CD8-positive, alpha-beta memory T cell (primary cell): ENCODE measurements at regions of chr3 and their contacts with region 1.

Region 1: DNA sequence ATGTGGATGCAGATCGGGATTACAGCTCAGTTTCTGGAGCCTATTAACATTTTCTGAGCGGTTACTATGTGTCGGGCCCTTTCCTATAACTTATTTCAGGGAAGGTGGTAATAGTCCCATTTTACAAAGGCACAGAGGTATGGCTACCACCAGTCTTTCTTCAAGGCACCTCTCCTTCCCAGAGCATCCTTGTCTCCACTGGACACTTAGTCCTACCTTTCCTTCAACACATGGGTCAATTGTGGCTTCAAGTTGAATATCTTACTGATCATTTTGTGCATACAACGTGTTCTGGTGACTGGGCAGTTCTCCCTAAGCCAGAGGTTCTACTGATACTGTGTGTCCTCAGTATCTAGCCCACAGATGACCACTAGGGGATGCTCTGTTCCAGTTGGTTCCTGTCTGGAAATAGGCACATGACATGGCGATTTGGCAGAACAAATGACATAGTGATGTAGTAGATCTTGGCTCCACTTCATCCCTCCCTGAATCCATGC is 60.7 kb upstream of the CMTM8 start:
- DNase-seq: peak in 4 of 5 donors; percentile 6 to 54 (median 16)
- H3K4me3 ChIP-seq: no peak overlapping the region
- H3K4me3 Mint-ChIP-seq: peak overlapping the region in 4 of 7 donors; percentile 23 to 54 (median 33)
- H3K27ac ChIP-seq: no peak overlapping the region
- H3K27ac Mint-ChIP-seq: peak overlapping the region in 1 of 8 donors; percentile 76
- H3K4me1 ChIP-seq: peaks cover 5% of the 10 kb centered on the region
- H3K4me1 Mint-ChIP-seq: peaks cover 6 to 13% (median 10%) of the 10 kb centered on the region in 3 donors
- H3K27me3 ChIP-seq: no peaks in the 10 kb centered on the region
- H3K27me3 Mint-ChIP-seq: peaks cover 7 to 12% of the 10 kb centered on the region in 2 donors

Region 2: GRCh38 chr3:32200490-32200889 is 22.7 kb after region 1 on chr3:
- CTCF ChIA-PET with region 1: no interaction called
- POLR2A ChIA-PET with region 1: no interaction called
- DNase-seq: no peak
- H3K4me3 ChIP-seq: no peak overlapping the region
- H3K4me3 Mint-ChIP-seq: no peak overlapping the region
- H3K27ac ChIP-seq: no peak overlapping the region
- H3K27ac Mint-ChIP-seq: no peak overlapping the region
- H3K4me1 ChIP-seq: no peaks in the 10 kb centered on the region
- H3K4me1 Mint-ChIP-seq: no peaks in the 10 kb centered on the region
- H3K27me3 ChIP-seq: peaks cover 3% of the 10 kb centered on the region
- H3K27me3 Mint-ChIP-seq: peaks cover 11 to 36% of the 10 kb centered on the region in 2 donors

Region 3: GRCh38 chr3:32334675-32335074 is 156.9 kb after region 1 on chr3:
- CTCF ChIA-PET with region 1: interaction called, 14 read pairs
- POLR2A ChIA-PET with region 1: no interaction called
- DNase-seq: peak in 2 of 5 donors; percentile 30 to 54
- H3K4me3 ChIP-seq: no peak overlapping the region
- H3K4me3 Mint-ChIP-seq: peak overlapping the region in 1 of 7 donors; percentile 71
- H3K27ac ChIP-seq: no peak overlapping the region
- H3K27ac Mint-ChIP-seq: peak overlapping the region in 1 of 8 donors; percentile 66
- H3K4me1 ChIP-seq: peaks cover 16% of the 10 kb centered on the region
- H3K4me1 Mint-ChIP-seq: peaks cover 3 to 27% (median 23%) of the 10 kb centered on the region in 3 donors
- H3K27me3 ChIP-seq: no peaks in the 10 kb centered on the region
- H3K27me3 Mint-ChIP-seq: no peaks in the 10 kb centered on the region